Activated CD4-positive, alpha-beta T cell treated with anti-CD3 and anti-CD28 coated beads, Interleukin-2, amount 10 ng/mL, durations not matched to agents 24 days and 14 days (primary cell): ENCODE measurements at regions of chr1 and their contacts with region 1.

Region 1: DNA sequence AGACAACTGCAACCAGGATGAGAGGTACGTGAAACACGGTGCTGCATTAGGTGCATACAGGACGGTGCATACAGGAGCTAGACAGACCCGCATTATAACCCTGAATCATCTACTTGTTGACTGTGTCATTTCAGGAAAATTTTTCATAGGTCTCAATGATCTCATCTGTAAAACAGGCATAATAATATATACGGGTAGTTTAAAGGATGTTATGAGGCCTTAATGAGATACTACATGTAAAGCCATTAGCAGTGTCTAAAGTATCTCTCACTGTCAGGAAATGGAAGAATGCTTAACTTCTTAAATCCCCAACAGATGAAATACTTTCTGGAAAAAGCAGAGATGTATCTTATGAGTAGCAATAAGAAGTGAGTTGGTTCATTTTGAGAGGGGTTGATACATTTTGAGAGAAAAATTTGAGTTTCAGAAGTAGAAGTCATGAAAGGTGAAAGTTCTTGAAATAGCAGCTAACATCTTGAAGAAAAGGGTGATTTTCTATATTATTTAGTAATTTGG is 669.5 kb downstream of the PTPRC start:
- DNase-seq: no peak
- H3K4me3 Mint-ChIP-seq: no peak overlapping the region
- H3K27ac Mint-ChIP-seq: peak overlapping the region; percentile 30
- H3K4me1 Mint-ChIP-seq: peaks cover 10% of the 10 kb centered on the region
- H3K27me3 Mint-ChIP-seq: peaks cover 15% of the 10 kb centered on the region

Region 2: GRCh38 chr1:199067483-199067882 is 240.9 kb before region 1 on chr1:
- intact Hi-C with region 1: no loop called
- DNase-seq: no peak
- H3K4me3 Mint-ChIP-seq: peak overlapping the region; percentile 24
- H3K27ac Mint-ChIP-seq: peak overlapping the region; percentile 6
- H3K4me1 Mint-ChIP-seq: peaks cover 12% of the 10 kb centered on the region
- H3K27me3 Mint-ChIP-seq: no peaks in the 10 kb centered on the region

Region 3: DNA sequence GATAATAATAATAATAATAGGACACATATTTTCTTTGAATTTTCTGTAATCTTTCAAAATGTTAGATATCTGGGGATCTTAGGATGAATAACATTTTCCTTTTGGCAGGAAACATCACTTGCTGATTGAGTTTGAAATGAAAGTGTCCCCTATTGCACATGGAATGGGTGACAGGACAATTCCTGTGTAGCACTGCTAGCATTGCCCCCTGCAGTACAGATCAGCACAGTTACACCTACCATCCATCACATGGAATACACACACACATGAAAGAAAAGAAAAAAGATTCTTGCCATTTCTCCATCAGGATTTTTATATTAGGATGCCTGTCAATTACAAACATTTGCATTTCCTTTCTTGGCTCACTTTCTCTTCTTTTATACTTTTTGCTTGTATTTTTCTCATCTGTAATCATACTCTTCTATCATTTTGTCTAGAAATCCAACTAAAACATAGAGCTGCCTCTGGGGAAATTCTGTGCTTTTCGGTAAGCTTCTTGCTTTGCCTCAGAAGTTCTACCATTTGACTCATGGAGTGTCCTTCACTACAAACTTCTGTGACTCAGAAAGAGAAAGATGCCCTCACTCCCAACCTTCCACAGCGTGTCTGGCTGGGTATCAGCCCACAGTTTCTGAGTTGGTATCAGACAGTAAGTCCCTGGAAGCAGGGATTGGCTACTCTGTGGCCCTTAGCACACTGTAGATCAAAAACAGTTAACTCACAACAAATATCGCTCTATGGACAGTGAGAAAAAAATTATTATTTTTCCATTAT is 28.3 kb before region 1 on chr1:
- intact Hi-C with region 1: loop called (anchors 2 kb)
- DNase-seq: no peak
- H3K4me3 Mint-ChIP-seq: no peak overlapping the region
- H3K27ac Mint-ChIP-seq: no peak overlapping the region
- H3K4me1 Mint-ChIP-seq: peaks cover 13% of the 10 kb centered on the region
- H3K27me3 Mint-ChIP-seq: peaks cover 2% of the 10 kb centered on the region

Region 4: DNA sequence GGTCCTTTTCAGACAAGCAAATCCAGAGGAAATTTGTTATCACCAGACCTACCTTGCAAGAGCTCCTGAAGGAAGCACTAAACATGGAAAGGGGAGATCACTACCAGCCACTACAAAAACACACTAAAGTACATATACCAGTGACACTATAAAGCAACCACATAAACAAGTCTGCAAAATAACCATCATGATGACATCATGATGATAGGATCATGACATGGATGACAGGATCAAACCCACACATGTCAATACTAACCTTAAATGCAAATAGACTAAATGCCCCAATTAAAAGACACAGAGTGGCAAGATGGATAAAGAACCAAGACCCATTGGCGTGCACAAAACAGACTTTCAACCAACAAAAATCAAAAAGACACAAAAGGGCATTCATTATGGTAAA is 30.4 kb after region 1 on chr1:
- intact Hi-C with region 1: no loop called
- DNase-seq: no peak
- H3K4me3 Mint-ChIP-seq: no peak overlapping the region
- H3K27ac Mint-ChIP-seq: no peak overlapping the region
- H3K4me1 Mint-ChIP-seq: no peaks in the 10 kb centered on the region
- H3K27me3 Mint-ChIP-seq: peaks cover 35% of the 10 kb centered on the region